A549 (cell line): ENCODE measurements at regions of chr16 and their contacts with region 1.

Region 1: GRCh38 chr16:28974437-28975157 is at the start of gene SPNS1:
- DNase-seq: peak; percentile 97 to 98
- ATAC-seq: peak; percentile 84 to 91
- H3K4me3 ChIP-seq: peak within 1 kb of the TSS; percentile 65
- H3K27ac ChIP-seq: peak within 1 kb of the TSS; percentile 87 to 88
- H3K4me1 ChIP-seq: peaks cover 9% of the 10 kb centered on the region; the same call in 2 of the 3 replicates
- CTCF ChIP-seq: no peak
- EP300 ChIP-seq: no peak; a peak in 1 of 5 replicates
- POLR2A ChIP-seq: peak; percentile 69
- RAD21 ChIP-seq: no peak
- polyA plus RNA-seq, gene SPNS1: 16.9 and 27.0 TPM in 2 replicates

Region 2: GRCh38 chr16:28898266-28898665 is 76.3 kb before region 1 on chr16:
- CTCF ChIA-PET with region 1: no interaction called
- POLR2A ChIA-PET with region 1: no interaction called
- DNase-seq: no peak
- ATAC-seq: no peak
- H3K4me3 ChIP-seq: no peak overlapping the region
- H3K27ac ChIP-seq: no peak overlapping the region
- H3K4me1 ChIP-seq: no peaks in the 10 kb centered on the region
- CTCF ChIP-seq: no peak
- EP300 ChIP-seq: no peak
- POLR2A ChIP-seq: no peak
- RAD21 ChIP-seq: no peak

Region 3: GRCh38 chr16:28964072-28964471 is 10.5 kb before region 1 on chr16:
- CTCF ChIA-PET with region 1: interaction called, 15 read pairs
- POLR2A ChIA-PET with region 1: interaction called, 3 read pairs
- DNase-seq: no peak
- ATAC-seq: no peak
- H3K4me3 ChIP-seq: no peak overlapping the region
- H3K27ac ChIP-seq: no peak overlapping the region
- H3K4me1 ChIP-seq: no peaks in the 10 kb centered on the region
- CTCF ChIP-seq: no peak
- EP300 ChIP-seq: no peak
- POLR2A ChIP-seq: no peak
- RAD21 ChIP-seq: no peak

Region 4: GRCh38 chr16:28984619-28985135 is 10.1 kb after region 1 on chr16 and contains the start of gene LAT:
- CTCF ChIA-PET with region 1: interaction called, 43 read pairs
- POLR2A ChIA-PET with region 1: interaction called, 5 read pairs
- DNase-seq: peak in 1 of 2 experiments; percentile 25
- ATAC-seq: peak; percentile 55 to 70
- H3K4me3 ChIP-seq: no peak within 1 kb of the TSS
- H3K27ac ChIP-seq: peak within 1 kb of the TSS; percentile 38 to 78; a peak in 4 of 6 replicates
- H3K4me1 ChIP-seq: peaks cover 15% of the 10 kb centered on the region; the same call in 2 of the 3 replicates
- CTCF ChIP-seq: no peak
- EP300 ChIP-seq: no peak
- POLR2A ChIP-seq: no peak
- RAD21 ChIP-seq: no peak
- polyA plus RNA-seq, gene LAT: 0.85 and 0.98 TPM in 2 replicates